AG04449 (cell line): ENCODE measurements at regions of chr9 and their contacts with region 1.

Region 1: DNA sequence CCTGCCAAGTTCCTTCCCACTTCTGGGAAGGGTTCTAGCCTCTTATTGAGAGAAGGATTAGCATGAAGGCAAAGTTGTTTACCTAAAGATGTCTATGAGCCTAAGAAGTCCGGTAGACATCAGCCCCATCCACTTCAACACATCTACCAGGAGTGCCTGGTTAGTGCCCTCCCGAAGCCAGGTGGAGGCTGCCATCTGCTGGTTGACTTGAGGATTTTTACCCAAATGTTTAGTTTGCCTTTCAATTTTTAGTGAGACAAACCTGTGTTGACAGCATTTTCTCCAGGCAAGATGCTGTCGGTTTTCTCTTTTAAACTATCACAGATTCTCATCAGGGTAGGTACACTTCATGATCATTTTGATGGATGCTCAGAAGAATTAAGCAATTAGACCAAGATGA is 83.6 kb upstream of the TNFSF8 start:
- DNase-seq: no peak
- H3K4me3 ChIP-seq: no peak overlapping the region
- CTCF ChIP-seq: peak; percentile 67

Region 2: GRCh38 chr9:114434878-114435311 is 579.1 kb before region 1 on chr9:
- CTCF ChIA-PET with region 1: interaction called, 13 read pairs
- POLR2A ChIA-PET with region 1: no interaction called
- DNase-seq: no peak
- H3K4me3 ChIP-seq: no peak overlapping the region
- CTCF ChIP-seq: peak; percentile 66

Region 3: GRCh38 chr9:114681594-114682332 is 332.2 kb before region 1 on chr9 and contains the start of gene TEX48:
- CTCF ChIA-PET with region 1: interaction called, 280 read pairs
- POLR2A ChIA-PET with region 1: no interaction called
- DNase-seq: no peak
- H3K4me3 ChIP-seq: no peak within 1 kb of the TSS
- CTCF ChIP-seq: peak; percentile 74

Region 4: DNA sequence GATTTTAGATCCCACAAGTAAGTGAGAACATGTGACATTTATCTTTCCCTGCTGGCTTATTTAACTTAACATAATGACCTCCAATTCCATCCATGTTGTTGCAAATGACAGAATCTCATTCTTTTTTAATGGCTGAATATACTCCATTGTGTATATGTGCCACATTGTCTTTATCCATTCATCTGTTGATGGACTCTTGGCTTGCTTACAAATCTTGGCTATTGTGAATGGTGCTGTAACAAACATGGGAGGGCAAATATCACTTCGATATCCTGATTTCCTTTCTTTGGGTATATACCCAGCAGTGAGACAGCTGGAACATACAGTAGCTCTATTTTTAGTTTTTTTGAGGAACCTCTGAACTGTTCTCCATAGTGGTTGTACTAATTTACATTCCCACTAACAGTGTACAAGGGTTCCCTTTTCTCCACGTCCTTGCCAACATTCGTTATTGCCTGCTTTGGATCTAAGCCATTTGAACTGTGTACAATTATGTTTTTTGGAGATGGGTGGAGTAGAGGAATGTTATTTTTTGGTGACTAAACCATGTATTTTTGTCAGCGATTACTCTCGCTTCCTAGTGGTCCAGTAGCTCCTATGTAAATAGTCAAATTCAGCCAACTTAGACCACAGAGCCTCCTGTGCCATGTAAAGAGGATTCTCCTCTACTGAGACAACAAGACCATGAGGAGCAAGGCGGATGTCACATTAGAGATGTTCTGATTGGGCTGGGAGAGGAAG is 268.7 kb before region 1 on chr9:
- CTCF ChIA-PET with region 1: interaction called, 15 read pairs
- POLR2A ChIA-PET with region 1: no interaction called
- DNase-seq: no peak
- H3K4me3 ChIP-seq: no peak overlapping the region
- CTCF ChIP-seq: no peak

Region 5: GRCh38 chr9:114914139-114914538 is 99.9 kb before region 1 on chr9:
- CTCF ChIA-PET with region 1: interaction called, 98 read pairs
- POLR2A ChIA-PET with region 1: no interaction called
- DNase-seq: no peak
- H3K4me3 ChIP-seq: no peak overlapping the region
- CTCF ChIP-seq: peak; percentile 22

Region 6: GRCh38 chr9:115042781-115043509 is 28.9 kb after region 1 on chr9:
- CTCF ChIA-PET with region 1: no interaction called
- POLR2A ChIA-PET with region 1: no interaction called
- DNase-seq: peak; percentile 33
- H3K4me3 ChIP-seq: no peak overlapping the region
- CTCF ChIP-seq: no peak

Region 7: GRCh38 chr9:115524453-115525059 is 510.6 kb after region 1 on chr9:
- CTCF ChIA-PET with region 1: interaction called, 36 read pairs
- POLR2A ChIA-PET with region 1: no interaction called
- DNase-seq: no peak
- H3K4me3 ChIP-seq: no peak overlapping the region
- CTCF ChIP-seq: peak; percentile 55